Calu3 (cell line): ENCODE measurements at regions of chr16 and their contacts with region 1.

Region 1: GRCh38 chr16:49755313-49755620 is 100.6 kb downstream of the ZNF423 start:
- DNase-seq: peak; percentile 34
- H3K4me3 Mint-ChIP-seq: peak overlapping the region; percentile 16
- H3K27ac Mint-ChIP-seq: no peak overlapping the region
- H3K4me1 Mint-ChIP-seq: no peaks in the 10 kb centered on the region
- H3K27me3 Mint-ChIP-seq: peaks cover 100% of the 10 kb centered on the region
- CTCF ChIP-seq: no peak

Region 2: DNA sequence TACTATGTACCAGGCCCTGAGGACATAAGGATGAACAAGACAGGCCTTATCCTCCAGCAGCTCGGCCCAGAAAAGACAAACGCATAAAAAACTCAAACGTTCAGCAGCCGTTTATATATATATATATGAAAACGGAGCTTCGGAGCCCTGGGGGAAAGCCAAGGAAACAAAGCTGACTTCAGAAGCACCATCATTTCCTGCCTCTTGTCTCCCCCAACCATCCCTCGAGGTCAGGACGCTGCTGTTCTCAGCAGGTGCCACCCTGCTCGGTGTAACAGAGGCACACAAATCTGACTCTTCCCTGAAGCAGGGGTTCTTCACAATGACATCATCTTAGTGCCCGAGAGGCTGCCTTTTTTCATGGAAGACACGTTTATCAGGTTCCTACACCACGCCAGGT is 46.2 kb before region 1 on chr16:
- CTCF ChIA-PET with region 1: no interaction called
- intact Hi-C with region 1: no loop called
- DNase-seq: no peak
- H3K4me3 Mint-ChIP-seq: no peak overlapping the region
- H3K27ac Mint-ChIP-seq: no peak overlapping the region
- H3K4me1 Mint-ChIP-seq: no peaks in the 10 kb centered on the region
- H3K27me3 Mint-ChIP-seq: peaks cover 97% of the 10 kb centered on the region
- CTCF ChIP-seq: no peak

Region 3: DNA sequence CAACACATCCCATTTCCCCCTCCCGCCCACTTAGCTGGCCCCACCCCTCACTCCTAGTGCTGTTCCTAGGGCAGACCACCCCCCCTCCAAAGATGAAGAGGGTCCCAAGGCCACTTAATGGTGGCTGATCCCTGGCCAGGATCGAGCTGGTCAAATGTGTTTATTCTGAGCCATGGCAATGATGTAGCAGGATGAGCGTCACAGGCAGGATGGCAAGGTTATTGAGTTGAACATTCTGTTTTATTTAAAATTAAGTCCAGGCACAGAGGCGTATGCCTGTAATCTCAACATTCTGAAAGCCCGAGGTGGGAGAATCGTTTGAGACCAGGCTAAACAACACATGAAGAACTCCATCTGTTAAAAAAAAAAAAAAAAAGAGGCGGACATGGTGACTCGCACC is 88.5 kb after region 1 on chr16:
- CTCF ChIA-PET with region 1: no interaction called
- intact Hi-C with region 1: loop called (anchors 1 kb)
- DNase-seq: no peak
- H3K4me3 Mint-ChIP-seq: no peak overlapping the region
- H3K27ac Mint-ChIP-seq: no peak overlapping the region
- H3K4me1 Mint-ChIP-seq: no peaks in the 10 kb centered on the region
- H3K27me3 Mint-ChIP-seq: peaks cover 91% of the 10 kb centered on the region
- CTCF ChIP-seq: no peak

Region 4: GRCh38 chr16:49926941-49927340 is 171.7 kb after region 1 on chr16:
- CTCF ChIA-PET with region 1: no interaction called
- intact Hi-C with region 1: loop called (anchors 2 kb)
- DNase-seq: no peak
- H3K4me3 Mint-ChIP-seq: no peak overlapping the region
- H3K27ac Mint-ChIP-seq: no peak overlapping the region
- H3K4me1 Mint-ChIP-seq: no peaks in the 10 kb centered on the region
- H3K27me3 Mint-ChIP-seq: peaks cover 98% of the 10 kb centered on the region
- CTCF ChIP-seq: no peak